Ascending aorta (tissue), 2 donors: ENCODE measurements at regions of chr7 and their contacts with region 1.

Region 1: DNA sequence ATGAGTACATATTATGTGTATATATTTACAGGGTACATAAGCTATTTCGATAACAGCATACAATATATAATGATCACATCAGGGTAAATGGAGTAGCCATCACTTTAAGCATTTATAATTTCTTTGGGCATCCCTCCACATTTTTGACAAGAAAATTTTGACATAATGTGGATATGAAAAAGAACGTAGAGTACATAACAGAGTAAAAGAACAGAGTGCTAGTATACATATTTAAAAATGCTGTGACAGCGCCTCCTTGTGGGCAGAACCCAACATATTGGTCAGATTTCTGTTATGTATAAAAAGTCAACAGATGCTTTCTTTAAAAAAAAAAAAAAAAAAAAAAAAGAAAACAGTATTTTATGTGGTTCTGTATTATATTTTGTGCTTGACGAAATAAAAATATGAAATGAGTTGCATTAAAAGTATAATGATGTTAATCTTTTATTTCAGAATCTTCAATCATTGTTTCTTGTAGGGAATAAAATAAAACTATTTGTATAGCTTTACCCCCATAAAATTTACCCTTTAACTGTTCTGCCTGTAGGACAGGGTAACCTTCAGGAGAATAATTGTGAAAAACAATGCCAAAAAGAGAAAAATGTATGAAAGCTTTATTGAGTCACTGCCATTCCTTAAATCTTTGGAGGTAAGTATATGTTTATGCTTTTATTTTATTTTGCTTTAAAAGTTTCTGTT is 18.3 kb upstream of the HBP1 start:
- DNase-seq: peak in 1 of 2 donors; percentile 88
- H3K4me3 ChIP-seq: no peak overlapping the region
- H3K27ac ChIP-seq: no peak overlapping the region
- H3K4me1 ChIP-seq: peaks cover 0 to 2% of the 10 kb centered on the region in 2 donors
- H3K27me3 ChIP-seq: no peaks in the 10 kb centered on the region
- CTCF ChIP-seq: peak; percentile 34 to 62 (median 51)

Region 2: GRCh38 chr7:106947244-106947728 is 203.2 kb before region 1 on chr7:
- intact Hi-C with region 1: loop called (anchors 5 kb)
- DNase-seq: no peak
- H3K4me3 ChIP-seq: no peak overlapping the region
- H3K27ac ChIP-seq: no peak overlapping the region
- H3K4me1 ChIP-seq: no peaks in the 10 kb centered on the region
- H3K27me3 ChIP-seq: no peaks in the 10 kb centered on the region
- CTCF ChIP-seq: peak in 1 of 3 experiments; percentile 39

Region 3: GRCh38 chr7:107462740-107463444 is 312.4 kb after region 1 on chr7:
- intact Hi-C with region 1: no loop called
- DNase-seq: peak in 1 of 2 donors; percentile 67
- H3K4me3 ChIP-seq: no peak overlapping the region
- H3K27ac ChIP-seq: no peak overlapping the region
- H3K4me1 ChIP-seq: no peaks in the 10 kb centered on the region
- H3K27me3 ChIP-seq: no peaks in the 10 kb centered on the region
- CTCF ChIP-seq: peak; percentile 68 to 84 (median 70)